Dendritic cell treated with granulocyte-macrophage colony-stimulating factor and Interleukin-4, amounts not matched to agents 40 ng/mL and 50 ng/mL, for 4 days (primary cell): ENCODE measurements at regions of chr19 and their contacts with region 1.

Region 1: GRCh38 chr19:2552859-2553258 is 76.9 kb downstream of the GADD45B start:
- H3K4me3 Mint-ChIP-seq: peak overlapping the region; percentile 62
- H3K27ac Mint-ChIP-seq: peak overlapping the region; percentile 79
- H3K4me1 Mint-ChIP-seq: peaks cover 67% of the 10 kb centered on the region
- H3K27me3 Mint-ChIP-seq: peaks cover 14% of the 10 kb centered on the region

Region 2: DNA sequence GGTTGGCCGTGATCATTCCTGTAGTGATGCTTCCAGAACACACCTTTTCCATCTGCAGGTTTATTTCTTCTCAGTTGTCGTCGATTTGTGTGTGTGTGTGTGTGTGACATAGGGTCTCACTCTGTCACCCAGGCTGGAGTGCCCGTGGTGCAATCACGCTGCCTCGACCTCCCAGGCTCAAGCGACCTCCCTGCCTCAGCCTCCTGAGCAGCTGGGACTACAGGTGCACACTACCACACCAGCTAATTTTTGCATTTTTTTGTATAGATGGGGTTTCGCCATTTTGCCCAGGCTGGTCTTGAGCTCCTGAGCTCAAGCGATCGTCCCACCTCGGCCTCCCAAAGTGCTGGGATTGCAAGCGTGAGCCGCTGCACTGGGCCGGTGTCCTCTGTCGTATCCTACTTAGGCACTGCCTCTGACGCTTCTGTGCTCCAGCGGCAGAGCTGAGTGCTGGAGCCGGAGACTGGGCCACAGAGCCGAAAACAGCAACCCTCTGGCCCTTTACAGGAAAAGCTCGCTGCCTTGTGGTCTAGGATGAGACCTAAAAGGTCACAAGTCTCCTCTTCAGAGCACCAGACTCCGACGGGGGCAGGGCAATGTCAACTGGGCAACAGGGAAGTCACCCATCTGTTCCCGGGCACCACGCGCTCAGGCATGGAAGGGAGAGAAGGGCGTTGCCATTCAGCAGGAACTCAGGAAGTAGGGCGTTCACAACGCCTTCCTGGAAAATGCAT is 14.6 kb after region 1 on chr19:
- intact Hi-C with region 1: loop called (anchors 1 kb)
- H3K4me3 Mint-ChIP-seq: peak overlapping the region; percentile 34
- H3K27ac Mint-ChIP-seq: peak overlapping the region; percentile 78
- H3K4me1 Mint-ChIP-seq: peaks cover 27% of the 10 kb centered on the region
- H3K27me3 Mint-ChIP-seq: peaks cover 21% of the 10 kb centered on the region

Region 3: DNA sequence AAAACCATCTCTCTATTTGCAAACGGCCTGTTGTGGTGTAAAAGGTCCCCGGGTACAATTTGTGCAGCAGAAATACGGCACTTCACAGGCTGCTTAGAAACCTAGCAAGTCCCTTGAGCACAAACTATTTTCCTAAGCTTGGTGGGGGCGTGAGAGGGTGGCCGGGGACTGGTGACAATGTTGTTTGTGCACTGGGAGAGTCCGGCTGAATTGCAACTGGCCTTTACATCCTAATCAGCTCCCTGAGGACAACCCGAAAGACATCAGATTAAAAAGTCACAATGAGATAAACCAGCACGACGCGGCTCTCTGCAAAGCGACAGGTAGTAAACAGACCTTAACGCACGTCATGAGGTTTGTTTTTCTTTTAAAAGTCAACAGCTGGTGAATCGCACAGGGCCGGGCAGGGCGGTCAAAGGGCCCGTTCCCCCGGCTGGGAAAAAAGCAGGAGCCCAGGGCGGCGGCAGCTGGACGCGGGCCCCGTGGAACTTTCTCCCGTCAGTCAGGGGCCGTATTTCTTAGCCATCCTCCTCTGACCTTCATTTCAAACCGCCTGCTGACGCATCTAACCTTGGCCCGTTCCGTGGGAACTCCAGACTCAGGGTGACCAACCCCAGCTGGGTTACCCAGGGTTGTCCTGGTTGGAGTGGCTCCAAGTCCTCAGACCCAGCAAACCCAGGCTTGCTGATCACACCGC is 35.4 kb after region 1 on chr19:
- intact Hi-C with region 1: no loop called
- H3K4me3 Mint-ChIP-seq: no peak overlapping the region
- H3K27ac Mint-ChIP-seq: no peak overlapping the region
- H3K4me1 Mint-ChIP-seq: peaks cover 5% of the 10 kb centered on the region
- H3K27me3 Mint-ChIP-seq: no peaks in the 10 kb centered on the region

Region 4: GRCh38 chr19:2610637-2611482 is 58.0 kb after region 1 on chr19:
- intact Hi-C with region 1: no loop called
- H3K4me3 Mint-ChIP-seq: peak overlapping the region; percentile 78
- H3K27ac Mint-ChIP-seq: peak overlapping the region; percentile 81
- H3K4me1 Mint-ChIP-seq: peaks cover 49% of the 10 kb centered on the region
- H3K27me3 Mint-ChIP-seq: peaks cover 19% of the 10 kb centered on the region